ENCODE measurements at regions of chr16 and their contacts with region 1.

Region 1: DNA sequence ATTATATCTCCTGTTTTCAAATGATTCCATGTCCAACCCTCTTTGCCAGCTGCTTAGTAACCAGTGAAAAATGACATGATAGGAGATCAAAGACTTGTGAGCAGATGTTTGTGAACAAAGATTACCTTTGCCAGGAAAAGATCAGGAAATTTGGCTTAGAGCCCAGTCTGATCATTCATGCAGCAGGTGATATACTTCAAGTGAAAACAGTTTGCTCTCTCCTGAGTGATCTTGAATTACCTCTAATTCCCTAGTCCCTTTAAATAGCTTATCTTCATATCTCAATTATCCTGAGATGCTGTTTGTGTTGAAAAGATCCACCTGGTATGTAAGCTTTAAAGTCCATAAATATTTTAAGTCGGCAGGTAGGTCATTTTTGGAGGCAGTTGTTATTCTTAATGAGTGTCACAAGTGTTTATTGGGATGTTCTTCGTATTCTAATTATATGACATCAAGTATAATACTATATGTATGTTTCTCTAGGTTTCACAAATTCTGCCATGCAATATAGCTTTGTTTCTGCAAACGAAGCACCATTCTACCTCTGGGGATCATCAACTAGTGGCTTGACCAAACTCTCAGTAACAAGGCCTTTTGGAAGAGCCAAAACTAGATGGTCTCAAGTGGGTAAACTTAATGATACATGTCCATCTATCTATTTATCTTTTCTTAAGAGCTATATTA is 13.2 kb upstream of the VPS35L start:
- DNase-seq: no peak
- H3K4me3 ChIP-seq: no peak overlapping the region
- H3K27ac ChIP-seq: no peak overlapping the region
- H3K4me1 ChIP-seq: no peaks in the 10 kb centered on the region
- CTCF ChIP-seq: no peak

Region 2: GRCh38 chr16:19316846-19317245 is 225.4 kb before region 1 on chr16:
- CTCF ChIA-PET with region 1: no interaction called
- POLR2A ChIA-PET with region 1: no interaction called
- intact Hi-C with region 1: no loop called
- DNase-seq: no peak
- H3K4me3 ChIP-seq: no peak overlapping the region
- H3K27ac ChIP-seq: no peak overlapping the region
- H3K4me1 ChIP-seq: no peaks in the 10 kb centered on the region
- CTCF ChIP-seq: no peak

Region 3: DNA sequence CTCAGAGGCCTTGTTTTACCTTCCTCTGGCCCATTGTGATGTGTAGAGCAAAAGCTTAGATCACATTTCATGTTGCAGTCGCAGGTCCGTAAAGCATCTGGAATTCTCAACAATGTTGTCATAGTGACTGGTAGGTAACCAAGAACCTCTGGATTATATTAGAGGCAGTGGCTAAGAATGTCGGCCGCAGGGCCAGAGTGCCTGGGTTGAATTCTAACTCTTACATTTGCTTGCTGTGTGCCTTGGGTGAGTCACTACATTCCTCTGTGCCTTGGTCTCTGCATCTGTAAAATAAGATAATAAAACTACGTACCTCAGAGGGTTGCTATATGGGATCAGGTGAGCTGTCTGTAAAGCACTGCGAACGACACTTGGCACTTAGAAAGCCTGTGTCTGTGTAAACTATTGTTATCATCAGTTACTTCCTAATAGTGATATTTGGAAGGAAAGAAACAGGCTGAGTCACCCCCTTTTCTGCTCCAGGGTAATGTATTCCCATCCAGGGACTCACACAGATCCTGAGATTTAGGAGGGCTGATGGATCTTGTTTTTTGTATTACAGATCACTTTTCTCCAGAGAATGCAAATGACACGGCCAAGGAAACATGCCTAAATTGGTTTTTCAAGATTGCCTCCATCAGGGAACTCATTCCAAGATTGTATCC is 65.5 kb after region 1 on chr16:
- CTCF ChIA-PET with region 1: no interaction called
- POLR2A ChIA-PET with region 1: no interaction called
- intact Hi-C with region 1: no loop called
- DNase-seq: no peak
- H3K4me3 ChIP-seq: no peak overlapping the region
- H3K27ac ChIP-seq: no peak overlapping the region
- H3K4me1 ChIP-seq: no peaks in the 10 kb centered on the region
- CTCF ChIP-seq: no peak

Region 4: DNA sequence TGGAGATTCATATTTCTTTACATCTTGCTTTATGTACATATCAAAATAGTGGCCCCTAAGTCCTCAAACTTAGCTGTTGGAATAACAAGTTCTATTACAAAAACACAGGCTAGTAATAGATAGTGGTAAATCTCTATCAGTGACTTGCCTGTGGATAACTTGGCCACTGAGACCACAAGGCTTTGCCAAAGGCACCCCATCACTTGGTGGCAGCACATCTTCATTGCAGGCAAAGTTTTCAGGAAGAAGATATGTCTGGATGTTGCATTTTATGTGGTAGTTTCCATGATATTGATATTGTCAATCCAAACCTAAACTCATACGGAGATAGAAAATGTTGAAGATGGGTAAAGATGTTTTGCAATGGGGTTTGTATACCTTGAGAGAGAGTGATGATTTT is 117.3 kb after region 1 on chr16:
- CTCF ChIA-PET with region 1: no interaction called
- POLR2A ChIA-PET with region 1: interaction called, 11 read pairs
- intact Hi-C with region 1: no loop called
- DNase-seq: no peak
- H3K4me3 ChIP-seq: no peak overlapping the region
- H3K27ac ChIP-seq: no peak overlapping the region
- H3K4me1 ChIP-seq: no peaks in the 10 kb centered on the region
- CTCF ChIP-seq: no peak